Heart left ventricle (tissue), 16 donors: ENCODE measurements at regions of chr2 and their contacts with region 1.

Region 1: DNA sequence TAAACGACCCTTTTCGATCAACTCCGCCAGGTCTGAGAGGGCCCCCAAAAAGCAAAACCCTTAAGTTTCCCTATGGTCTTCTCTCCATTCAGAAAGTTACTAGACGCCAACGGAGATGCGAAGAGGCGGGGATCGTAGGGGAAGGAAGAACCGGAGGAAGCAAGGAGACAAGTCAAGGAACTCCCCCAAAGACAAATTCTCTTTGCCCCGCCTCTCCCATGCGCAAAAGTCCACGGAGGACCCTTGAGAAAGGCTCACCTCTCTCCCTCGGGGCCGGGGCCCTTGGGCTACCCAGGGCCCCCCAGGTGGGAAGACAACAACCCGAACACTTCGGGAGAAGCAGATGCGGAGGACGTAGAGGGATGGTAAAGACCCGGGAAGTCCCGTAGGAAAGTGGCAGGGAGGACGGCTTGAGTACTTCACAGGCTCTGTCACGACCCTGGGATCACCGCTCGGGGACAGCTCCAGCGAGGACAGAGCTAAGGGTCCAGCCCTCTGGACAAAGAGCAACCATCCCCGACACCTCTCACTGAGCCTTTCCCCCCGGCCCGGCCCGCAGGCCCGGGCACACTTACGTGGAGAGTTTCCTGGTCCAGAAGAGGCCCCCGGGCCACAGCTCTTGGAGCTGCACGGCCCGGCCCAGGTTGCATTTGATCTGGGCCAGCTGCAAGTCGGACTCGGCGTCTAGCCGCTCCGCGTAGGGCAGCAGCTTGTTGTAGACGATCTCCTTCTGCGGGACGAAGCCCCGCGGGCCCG is 647 bp downstream of the PSME4 start:
- DNase-seq: peak; percentile 35 to 72 (median 44)
- ATAC-seq: peak; percentile 32 to 58 (median 38)
- H3K4me3 ChIP-seq: peak overlapping the region; percentile 73 to 100 (median 86)
- H3K27ac ChIP-seq: peak overlapping the region; percentile 91 to 99 (median 96)
- H3K4me1 ChIP-seq: peaks cover 0 to 57% (median 24%) of the 10 kb centered on the region in 12 donors
- H3K27me3 ChIP-seq: no peaks in the 10 kb centered on the region
- CTCF ChIP-seq: no peak
- POLR2A ChIP-seq: no peak

Region 2: GRCh38 chr2:54073797-54074196 is 103.7 kb after region 1 on chr2:
- intact Hi-C with region 1: loop called in 1 of 10 experiments (anchors 10 kb)
- DNase-seq: no peak
- ATAC-seq: no peak
- H3K4me3 ChIP-seq: no peak overlapping the region
- H3K27ac ChIP-seq: no peak overlapping the region
- H3K4me1 ChIP-seq: peaks cover 0 to 26% (median 0%) of the 10 kb centered on the region in 12 donors
- H3K27me3 ChIP-seq: no peaks in the 10 kb centered on the region
- CTCF ChIP-seq: no peak
- POLR2A ChIP-seq: no peak